GM10248 (cell line): ENCODE measurements at regions of chr3 and their contacts with region 1.

Region 1: GRCh38 chr3:58471025-58471887 is 20.6 kb upstream of the KCTD6 start:
- DNase-seq: peak; percentile 44
- CTCF ChIP-seq: no peak

Region 2: GRCh38 chr3:58491506-58492402 is 20.5 kb after region 1 on chr3 and contains the start of gene KCTD6:
- CTCF ChIA-PET with region 1: interaction called, 28 read pairs
- POLR2A ChIA-PET with region 1: no interaction called
- DNase-seq: peak; percentile 96
- CTCF ChIP-seq: peak; percentile 96

Region 3: DNA sequence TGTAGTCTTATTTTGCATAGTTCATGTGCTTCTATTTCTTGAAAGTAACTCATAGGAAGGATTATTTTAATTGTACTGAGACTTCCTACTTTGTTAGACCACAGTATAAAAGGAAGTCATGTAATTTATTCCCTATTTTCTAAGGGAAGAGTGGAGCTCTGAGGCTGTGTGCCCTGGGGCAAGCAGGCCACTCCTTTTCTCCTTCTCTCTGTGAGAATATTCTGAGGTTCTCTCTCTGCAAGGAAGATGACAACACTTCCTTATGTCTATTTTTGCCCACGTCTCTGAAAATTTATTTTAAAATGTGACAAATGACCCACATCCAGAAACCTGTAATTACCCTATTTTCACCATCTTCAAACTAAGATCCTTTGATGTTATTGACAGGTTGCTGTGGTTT is 31.6 kb after region 1 on chr3:
- CTCF ChIA-PET with region 1: no interaction called
- POLR2A ChIA-PET with region 1: no interaction called
- DNase-seq: no peak
- CTCF ChIP-seq: no peak

Region 4: GRCh38 chr3:58628823-58629562 is 157.7 kb after region 1 on chr3:
- CTCF ChIA-PET with region 1: no interaction called
- POLR2A ChIA-PET with region 1: no interaction called
- DNase-seq: no peak
- CTCF ChIP-seq: no peak

Region 5: DNA sequence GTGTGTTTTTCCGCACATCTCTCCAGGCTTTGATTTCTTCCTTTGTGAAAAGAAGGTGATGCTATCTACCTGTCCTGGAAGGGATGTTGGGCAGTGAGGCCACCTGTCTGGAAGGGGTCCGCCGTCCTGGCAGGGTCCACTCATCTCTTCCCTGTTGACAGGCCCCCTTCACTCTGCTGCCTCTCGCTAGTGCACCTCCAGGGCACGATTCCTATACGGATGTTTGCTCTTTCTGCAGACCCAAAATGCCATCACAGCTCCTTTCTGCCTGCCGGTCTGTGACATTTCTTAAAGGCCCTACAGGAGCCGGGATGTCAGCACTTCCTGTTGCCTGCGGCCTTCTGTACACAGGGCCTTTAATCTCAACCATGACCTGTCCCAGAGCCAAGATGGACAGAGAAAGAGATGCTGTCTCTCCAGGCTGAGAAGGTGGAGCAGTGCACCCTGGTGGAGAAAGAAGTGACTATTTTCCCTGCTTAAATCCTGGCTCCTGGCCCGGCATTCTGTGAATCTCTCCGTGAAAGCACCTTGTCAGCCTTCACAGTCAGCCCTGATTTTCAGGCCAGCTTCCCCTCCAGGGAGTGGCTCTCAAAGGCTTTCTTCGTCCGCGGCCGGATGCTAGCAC is 187.9 kb after region 1 on chr3:
- CTCF ChIA-PET with region 1: no interaction called
- POLR2A ChIA-PET with region 1: no interaction called
- DNase-seq: no peak
- CTCF ChIP-seq: no peak